Upper lobe of right lung (tissue), 1 donor: ENCODE measurements at regions of chr2 and their contacts with region 1.

Region 1: DNA sequence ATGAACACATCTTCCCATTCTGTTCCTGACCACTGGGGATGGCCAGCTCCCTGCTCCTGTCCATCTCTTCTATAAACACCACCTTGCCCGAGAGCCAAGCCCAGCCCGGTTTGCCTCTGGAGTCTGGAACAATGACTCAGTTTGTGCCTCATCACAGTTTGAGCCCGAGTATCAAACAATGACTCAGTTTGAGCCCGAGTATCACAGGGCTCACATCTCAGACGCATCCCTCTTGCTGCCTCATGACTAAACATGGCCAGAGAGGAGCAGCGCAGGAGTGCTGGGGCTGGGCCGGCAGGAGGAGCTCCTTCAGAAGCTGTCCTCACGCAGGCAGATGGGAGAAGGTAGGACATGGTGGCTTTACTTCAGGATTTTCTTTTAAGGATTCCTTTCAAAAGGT is 68.7 kb downstream of the PXDN start:
- DNase-seq: no peak
- ATAC-seq: no peak
- H3K4me3 ChIP-seq: no peak overlapping the region
- H3K27ac ChIP-seq: no peak overlapping the region
- H3K4me1 ChIP-seq: no peaks in the 10 kb centered on the region
- H3K27me3 ChIP-seq: no peaks in the 10 kb centered on the region
- CTCF ChIP-seq: no peak

Region 2: GRCh38 chr2:1742681-1743395 is 67.2 kb after region 1 on chr2:
- intact Hi-C with region 1: loop called (anchors 10 kb)
- DNase-seq: peak; percentile 84
- ATAC-seq: peak; percentile 70
- H3K4me3 ChIP-seq: peak overlapping the region; percentile 67
- H3K27ac ChIP-seq: peak overlapping the region; percentile 85
- H3K4me1 ChIP-seq: peaks cover 3% of the 10 kb centered on the region
- H3K27me3 ChIP-seq: peaks cover 18% of the 10 kb centered on the region
- CTCF ChIP-seq: peak; percentile 48